ENCODE measurements at regions of chr11 and their contacts with region 1.

Region 1: DNA sequence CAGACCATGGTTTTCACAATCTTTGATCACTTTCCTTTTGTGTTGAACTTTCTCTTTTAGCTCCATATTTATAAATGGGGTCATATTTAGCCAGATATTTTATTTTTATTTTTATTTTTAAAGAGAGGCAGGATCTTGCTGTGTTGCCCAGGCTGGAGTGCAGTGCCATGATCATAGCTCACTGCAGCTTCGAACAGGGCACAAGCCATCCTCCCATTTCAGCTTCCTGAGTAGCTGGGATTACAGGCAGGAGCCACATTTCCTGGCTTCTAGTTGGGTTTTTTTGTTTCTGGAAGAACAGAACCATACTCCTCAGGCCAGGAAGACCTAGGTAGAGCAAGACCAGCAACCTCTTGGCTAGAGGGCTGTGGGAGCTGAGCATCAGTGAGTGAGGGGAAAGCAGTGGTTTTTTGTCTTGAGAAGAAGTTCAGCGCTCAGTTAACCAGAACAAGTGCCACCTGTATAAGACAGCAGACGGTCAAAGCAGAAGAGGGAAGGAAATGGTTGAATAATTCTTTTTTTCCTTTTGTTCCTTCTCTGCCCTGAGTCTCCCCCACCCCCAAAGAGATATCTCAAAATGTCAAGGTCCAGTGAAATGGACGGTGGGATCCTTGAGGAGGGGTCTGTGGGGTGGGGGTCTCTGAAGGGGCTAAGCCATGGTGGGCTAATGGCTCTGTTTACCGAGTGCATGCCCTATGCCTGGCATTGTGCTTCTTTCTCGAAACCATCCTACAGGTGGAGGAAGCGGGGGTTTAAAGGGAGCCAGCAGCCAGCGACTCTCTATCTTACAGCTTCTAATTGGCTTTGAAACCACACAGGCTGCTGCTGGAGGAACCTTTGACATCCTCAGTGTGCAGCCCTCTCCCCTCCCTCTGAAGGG is 63.0 kb downstream of the PTPRJ start:
- DNase-seq: no peak
- H3K4me3 ChIP-seq: peak overlapping the region in 1 of 3 experiments; percentile 31
- H3K4me3 Mint-ChIP-seq: peak overlapping the region in 1 of 2 donors; percentile 63
- H3K27ac ChIP-seq: peak overlapping the region; percentile 11 to 55
- H3K27ac Mint-ChIP-seq: peak overlapping the region; percentile 15 to 86 (median 73)
- H3K4me1 ChIP-seq: peaks cover 46 to 63% of the 10 kb centered on the region in 2 donors
- H3K4me1 Mint-ChIP-seq: peaks cover 71% of the 10 kb centered on the region
- H3K27me3 ChIP-seq: no peaks in the 10 kb centered on the region
- H3K27me3 Mint-ChIP-seq: no peaks in the 10 kb centered on the region
- CTCF ChIP-seq: no peak

Region 2: DNA sequence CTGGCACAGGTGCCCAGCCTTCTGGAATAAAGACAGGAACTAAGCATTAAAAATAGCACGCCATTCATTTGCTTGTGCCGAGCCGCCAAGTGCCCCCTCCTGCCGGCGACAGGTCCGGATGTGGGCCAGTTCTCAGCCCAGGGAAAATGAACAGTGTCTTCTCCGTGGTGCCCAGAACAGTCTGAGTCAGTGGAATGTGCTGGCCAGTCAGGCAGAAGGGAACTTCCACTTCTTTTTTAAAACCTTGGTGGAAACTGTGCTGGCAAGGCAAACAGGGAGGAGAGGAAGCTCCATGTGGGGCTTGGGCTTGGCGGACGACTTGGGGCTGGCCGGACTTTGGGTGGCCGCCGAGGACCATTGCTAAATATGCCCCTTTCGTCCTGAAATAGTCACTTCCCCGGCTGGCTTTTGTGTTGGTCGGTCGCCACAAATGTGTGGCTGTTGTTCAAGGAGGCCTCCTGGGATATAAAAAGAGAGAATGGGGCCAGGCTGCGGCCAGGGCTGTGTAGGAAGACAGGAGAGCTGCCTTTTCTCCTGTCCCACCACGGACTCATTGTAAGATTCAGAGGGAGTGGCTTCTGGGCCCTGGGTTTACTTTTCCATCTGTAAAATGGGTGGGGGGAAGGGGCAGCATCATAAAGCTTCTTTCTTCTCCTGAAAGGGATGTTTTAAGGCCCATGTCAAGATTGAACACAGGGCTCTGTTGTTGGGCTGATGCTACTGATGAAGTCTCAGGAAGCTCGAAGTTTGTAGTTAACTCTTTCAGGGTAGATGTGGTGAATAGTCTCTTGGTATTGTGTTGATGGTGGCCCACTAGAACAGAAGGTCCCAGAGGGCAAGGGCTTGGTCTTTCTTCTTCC is 38.0 kb after region 1 on chr11:
- intact Hi-C with region 1: loop called in 1 of 2 experiments (anchors 5 kb)
- DNase-seq: peak; percentile 66 to 89 (median 68)
- H3K4me3 ChIP-seq: peak overlapping the region in 1 of 3 experiments; percentile 10
- H3K4me3 Mint-ChIP-seq: peak overlapping the region in 1 of 2 donors; percentile 15
- H3K27ac ChIP-seq: peak overlapping the region; percentile 45 to 66
- H3K27ac Mint-ChIP-seq: peak overlapping the region; percentile 41 to 90 (median 69)
- H3K4me1 ChIP-seq: peaks cover 54 to 60% of the 10 kb centered on the region in 2 donors
- H3K4me1 Mint-ChIP-seq: peaks cover 56% of the 10 kb centered on the region
- H3K27me3 ChIP-seq: no peaks in the 10 kb centered on the region
- H3K27me3 Mint-ChIP-seq: peaks cover 0 to 6% (median 0%) of the 10 kb centered on the region in 3 donors
- CTCF ChIP-seq: no peak

Measured in CD14-positive monocyte (primary cell).